ENCODE measurements at regions of chr21 and their contacts with region 1.

Region 1: GRCh38 chr21:17679002-17679600 is 66.4 kb upstream of the BTG3 start:
- DNase-seq: peak; percentile 73
- H3K4me3 Mint-ChIP-seq: no peak overlapping the region
- H3K27ac Mint-ChIP-seq: no peak overlapping the region
- H3K4me1 Mint-ChIP-seq: no peaks in the 10 kb centered on the region
- H3K27me3 Mint-ChIP-seq: no peaks in the 10 kb centered on the region
- CTCF ChIP-seq: peak; percentile 80

Region 2: DNA sequence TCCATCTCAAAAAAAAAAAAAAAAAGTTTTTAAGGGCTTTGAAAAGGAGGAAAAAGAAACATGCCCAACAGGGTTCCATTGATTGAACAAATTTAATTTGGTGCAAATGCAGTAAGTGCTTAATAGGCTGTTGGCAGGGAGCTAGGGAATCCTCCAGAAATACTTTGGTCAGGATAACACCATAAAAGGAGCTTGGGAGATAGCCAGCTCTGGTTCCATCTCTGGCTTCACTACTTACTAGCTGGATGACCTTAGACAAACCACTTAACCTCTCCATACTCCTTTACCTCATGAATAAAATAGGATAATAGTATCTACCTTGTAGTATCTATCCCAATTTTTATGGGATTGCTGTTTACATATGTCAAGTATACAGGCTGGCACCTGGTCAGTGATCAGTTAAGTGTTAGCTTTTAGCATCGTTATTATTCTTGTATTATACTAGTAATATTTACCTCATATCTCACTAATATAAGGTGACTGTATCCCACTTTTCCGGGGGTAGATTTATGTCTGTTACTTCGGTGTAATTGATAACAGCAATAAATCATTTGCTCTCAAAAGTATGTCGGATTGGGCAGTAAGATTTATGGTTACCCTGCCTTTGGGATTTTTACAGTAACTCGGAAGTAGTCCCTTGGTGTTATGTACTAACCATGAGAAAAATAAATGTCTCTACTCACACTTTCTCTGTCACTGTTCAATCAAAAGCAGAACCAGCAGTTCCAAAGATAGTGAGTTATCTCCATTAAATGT is 102.8 kb before region 1 on chr21:
- CTCF ChIA-PET with region 1: no interaction called
- POLR2A ChIA-PET with region 1: no interaction called
- intact Hi-C with region 1: no loop called
- DNase-seq: no peak
- H3K4me3 Mint-ChIP-seq: no peak overlapping the region
- H3K27ac Mint-ChIP-seq: no peak overlapping the region
- H3K4me1 Mint-ChIP-seq: no peaks in the 10 kb centered on the region
- H3K27me3 Mint-ChIP-seq: no peaks in the 10 kb centered on the region
- CTCF ChIP-seq: no peak

Region 3: GRCh38 chr21:17903029-17903806 is 224.1 kb after region 1 on chr21:
- CTCF ChIA-PET with region 1: interaction called, 33 read pairs
- POLR2A ChIA-PET with region 1: interaction called, 4 read pairs
- intact Hi-C with region 1: loop called (anchors 1 kb)
- DNase-seq: peak; percentile 45
- H3K4me3 Mint-ChIP-seq: no peak overlapping the region
- H3K27ac Mint-ChIP-seq: no peak overlapping the region
- H3K4me1 Mint-ChIP-seq: peaks cover 12% of the 10 kb centered on the region
- H3K27me3 Mint-ChIP-seq: no peaks in the 10 kb centered on the region
- CTCF ChIP-seq: peak; percentile 9

Region 4: GRCh38 chr21:18369115-18369514 is 690.0 kb after region 1 on chr21:
- CTCF ChIA-PET with region 1: no interaction called
- POLR2A ChIA-PET with region 1: no interaction called
- intact Hi-C with region 1: loop called (anchors 2 kb)
- DNase-seq: peak; percentile 65
- H3K4me3 Mint-ChIP-seq: no peak overlapping the region
- H3K27ac Mint-ChIP-seq: no peak overlapping the region
- H3K4me1 Mint-ChIP-seq: no peaks in the 10 kb centered on the region
- H3K27me3 Mint-ChIP-seq: no peaks in the 10 kb centered on the region
- CTCF ChIP-seq: peak; percentile 20

Measured in MCF 10A (cell line).